Pancreas (tissue), 10 donors: ENCODE measurements at regions of chr9 and their contacts with region 1.

Region 1: GRCh38 chr9:23686257-23686656 is 139.8 kb downstream of the ELAVL2 start:
- DNase-seq: no peak
- ATAC-seq: no peak
- H3K4me3 ChIP-seq: no peak overlapping the region
- H3K27ac ChIP-seq: no peak overlapping the region
- H3K4me1 ChIP-seq: no peaks in the 10 kb centered on the region
- H3K27me3 ChIP-seq: no peaks in the 10 kb centered on the region
- CTCF ChIP-seq: no peak

Region 2: GRCh38 chr9:23590276-23591000 is 95.8 kb before region 1 on chr9:
- intact Hi-C with region 1: no loop called
- DNase-seq: no peak
- ATAC-seq: peak in 2 of 4 donors; percentile 51 to 62
- H3K4me3 ChIP-seq: peak overlapping the region in 1 of 4 donors; percentile 4
- H3K27ac ChIP-seq: no peak overlapping the region
- H3K4me1 ChIP-seq: no peaks in the 10 kb centered on the region
- H3K27me3 ChIP-seq: no peaks in the 10 kb centered on the region
- CTCF ChIP-seq: no peak

Region 3: GRCh38 chr9:23611869-23612268 is 74.4 kb before region 1 on chr9:
- intact Hi-C with region 1: no loop called
- DNase-seq: no peak
- ATAC-seq: no peak
- H3K4me3 ChIP-seq: no peak overlapping the region
- H3K27ac ChIP-seq: no peak overlapping the region
- H3K4me1 ChIP-seq: no peaks in the 10 kb centered on the region
- H3K27me3 ChIP-seq: no peaks in the 10 kb centered on the region
- CTCF ChIP-seq: no peak

Region 4: GRCh38 chr9:23669776-23670175 is 16.5 kb before region 1 on chr9:
- intact Hi-C with region 1: loop called in 1 of 3 experiments (anchors 2 kb)
- DNase-seq: no peak
- ATAC-seq: no peak
- H3K4me3 ChIP-seq: no peak overlapping the region
- H3K27ac ChIP-seq: no peak overlapping the region
- H3K4me1 ChIP-seq: peaks cover 0 to 4% (median 0%) of the 10 kb centered on the region in 3 donors
- H3K27me3 ChIP-seq: no peaks in the 10 kb centered on the region
- CTCF ChIP-seq: no peak